Mucosa of descending colon (tissue), 3 donors: ENCODE measurements at regions of chr6 and their contacts with region 1.

Region 1: GRCh38 chr6:105402939-105403935 is at the start of gene PREP:
- DNase-seq: peak; percentile 86 to 93 (median 93)
- ATAC-seq: peak; percentile 97
- H3K4me3 ChIP-seq: peak within 1 kb of the TSS; percentile 90
- H3K4me1 ChIP-seq: peaks cover 24% of the 10 kb centered on the region
- CTCF ChIP-seq: peak; percentile 35
- total RNA-seq, gene PREP: 46.5 to 74.2 (median 72.3) TPM

Region 2: DNA sequence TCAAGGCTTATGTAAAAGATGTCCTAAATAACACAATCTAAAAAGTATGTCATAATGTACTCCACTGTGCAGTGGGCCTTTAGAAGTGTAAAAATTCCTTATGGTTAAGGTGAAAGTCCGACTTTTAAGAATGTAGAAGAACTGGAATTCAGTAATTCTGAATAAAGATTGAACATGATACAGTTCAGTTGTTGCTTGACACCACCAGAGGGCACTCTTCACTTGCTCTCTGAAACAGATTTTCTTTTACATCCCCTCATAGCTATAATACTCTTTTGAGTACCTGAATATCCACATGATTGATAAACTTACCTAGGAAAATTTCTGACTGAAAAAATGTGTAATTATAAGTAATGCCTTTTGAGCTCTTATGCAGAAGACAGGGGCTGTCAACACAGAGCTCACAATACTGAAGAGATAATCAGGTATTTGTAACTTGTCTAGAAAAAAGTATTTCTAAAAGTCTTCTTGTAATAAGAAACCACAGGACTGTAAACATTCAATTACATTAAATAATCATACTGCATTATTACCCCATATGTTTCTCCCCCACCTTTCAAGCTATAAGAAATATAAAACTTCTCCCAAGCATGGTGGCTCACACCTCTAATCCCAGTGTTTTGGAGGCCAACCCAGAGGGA is 315.5 kb before region 1 on chr6:
- intact Hi-C with region 1: loop called in 1 of 2 experiments (anchors 5 kb)
- DNase-seq: peak in 1 of 3 donors; percentile 69
- ATAC-seq: peak; percentile 67
- H3K4me3 ChIP-seq: peak overlapping the region; percentile 9
- H3K4me1 ChIP-seq: no peaks in the 10 kb centered on the region
- CTCF ChIP-seq: peak; percentile 60

Region 3: DNA sequence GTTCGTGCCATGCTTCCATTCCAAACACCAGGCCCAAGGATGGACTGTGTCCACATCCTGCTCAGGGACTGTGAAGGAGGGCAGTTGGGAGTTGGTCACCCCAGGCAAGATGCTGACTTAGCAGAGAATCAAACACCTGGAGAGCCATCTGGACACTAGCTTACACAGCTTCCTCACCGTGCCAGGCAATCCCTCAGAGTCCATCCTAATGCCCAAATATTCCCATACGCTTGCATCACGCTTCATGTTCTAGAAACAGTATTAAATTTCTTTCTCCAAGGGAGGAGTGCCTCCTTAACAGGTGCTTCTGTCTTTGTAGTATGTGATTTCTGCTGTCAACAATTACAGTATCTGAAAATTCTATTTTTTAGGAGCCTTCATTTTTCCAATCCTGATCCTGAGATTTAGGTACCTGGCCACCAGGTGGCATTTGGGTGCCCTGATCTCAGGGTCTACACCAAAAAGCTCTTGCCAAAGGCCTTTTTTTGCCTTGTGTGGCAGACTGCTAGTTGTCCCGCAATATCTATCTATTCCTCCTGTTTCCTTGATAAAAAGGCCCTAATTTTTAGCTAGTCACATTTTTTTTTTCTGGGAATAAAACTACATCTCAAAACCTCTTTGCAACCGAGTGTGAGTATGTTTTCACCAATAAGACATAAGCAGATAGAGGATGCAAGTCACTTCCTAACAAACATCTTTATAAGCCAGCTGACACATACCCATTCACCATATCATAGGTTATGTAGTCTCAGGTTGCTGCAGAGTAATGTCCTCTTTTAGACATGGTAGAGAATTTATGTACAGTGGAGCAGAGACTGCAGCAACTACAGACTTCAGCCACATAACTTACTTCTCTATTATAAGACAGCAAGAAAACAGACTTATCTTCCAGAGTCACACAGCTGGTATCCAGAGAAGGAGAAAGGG is 85.4 kb before region 1 on chr6:
- intact Hi-C with region 1: loop called in 1 of 2 experiments (anchors 10 kb)
- DNase-seq: peak in 1 of 3 donors; percentile 58
- ATAC-seq: peak; percentile 47
- H3K4me3 ChIP-seq: no peak overlapping the region
- H3K4me1 ChIP-seq: no peaks in the 10 kb centered on the region
- CTCF ChIP-seq: no peak